ENCODE measurements at regions of chr4 and their contacts with region 1.

Region 1: DNA sequence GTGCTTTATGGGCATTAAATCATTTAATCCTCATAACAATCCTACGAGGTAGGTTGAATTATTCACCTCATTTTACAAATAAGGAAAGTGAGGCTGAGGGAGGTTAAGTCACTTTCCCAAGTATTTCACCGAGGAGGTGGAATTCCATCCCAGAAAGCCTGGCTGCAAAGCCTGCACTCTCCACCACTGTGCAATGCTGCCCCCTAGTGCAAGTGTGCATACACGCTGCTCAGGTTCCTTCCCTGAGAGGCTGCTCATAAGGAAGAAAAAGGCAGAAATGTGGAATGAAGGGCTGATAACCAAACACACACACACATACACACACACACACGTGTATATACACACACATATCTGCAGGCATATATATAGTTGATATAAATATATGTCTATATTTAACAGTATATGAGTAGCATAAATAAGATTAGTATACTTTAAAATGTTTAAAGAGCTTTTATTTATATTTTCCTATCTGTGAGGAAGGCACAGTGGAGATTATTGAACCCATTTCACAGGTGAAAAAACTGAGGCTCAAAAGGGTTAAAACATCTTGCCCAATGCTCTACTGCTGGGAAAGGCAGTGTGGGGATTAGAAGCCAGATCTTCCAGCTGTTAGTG is 714.5 kb upstream of the TENM3 start:
- DNase-seq: peak; percentile 22
- CTCF ChIP-seq: peak; percentile 88

Region 2: GRCh38 chr4:180828440-180829018 is 700.1 kb before region 1 on chr4:
- CTCF ChIA-PET with region 1: interaction called, 11 read pairs
- POLR2A ChIA-PET with region 1: no interaction called
- DNase-seq: no peak
- CTCF ChIP-seq: peak; percentile 55

Region 3: GRCh38 chr4:181143250-181143854 is 385.3 kb before region 1 on chr4:
- CTCF ChIA-PET with region 1: interaction called, 69 read pairs
- POLR2A ChIA-PET with region 1: no interaction called
- DNase-seq: peak; percentile 44
- CTCF ChIP-seq: peak; percentile 81

Region 4: DNA sequence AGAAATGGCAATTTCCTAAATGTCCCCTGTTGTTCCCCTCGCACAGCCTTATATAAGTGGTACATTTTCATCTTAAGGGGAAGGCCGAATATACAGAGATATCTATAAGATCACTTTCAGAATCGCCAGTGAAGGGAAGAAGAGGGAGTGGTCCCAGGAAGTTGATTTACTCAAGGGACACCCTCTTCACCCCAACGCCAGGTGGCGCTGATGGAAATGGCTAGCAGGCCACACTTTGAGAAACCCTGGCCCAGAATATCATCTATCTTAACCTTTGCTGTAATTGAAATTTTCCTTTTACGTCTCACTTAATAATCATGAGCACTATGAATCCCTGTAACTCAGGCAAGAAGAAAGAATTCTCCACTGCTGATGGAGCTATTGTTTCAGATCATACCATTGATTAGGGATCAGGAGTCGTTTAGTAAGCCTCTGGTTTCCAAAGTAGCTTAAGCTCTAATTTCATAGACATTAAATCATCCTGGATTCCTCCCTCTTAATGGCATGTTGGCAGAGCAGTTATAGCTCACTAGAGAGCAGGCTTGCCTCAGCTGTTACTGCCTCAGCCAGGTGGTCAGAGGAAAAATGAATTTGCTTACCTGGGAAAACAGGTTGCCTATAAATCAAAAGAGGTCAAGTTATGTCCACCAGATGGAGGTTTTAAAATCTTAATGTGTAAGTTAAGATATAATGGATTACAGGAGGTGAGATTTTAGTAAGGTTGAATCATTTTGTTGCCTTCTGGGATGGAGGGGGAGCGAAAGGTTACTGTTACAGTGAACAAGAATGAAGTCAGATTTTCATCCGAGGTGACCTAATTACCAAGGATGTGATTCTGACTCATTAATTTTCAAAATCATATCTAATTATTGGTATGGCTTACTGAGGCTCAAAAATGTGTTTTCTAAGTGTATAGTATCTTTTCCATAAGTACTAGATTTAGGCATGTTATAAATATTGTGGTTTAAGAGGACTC is 226.7 kb before region 1 on chr4:
- CTCF ChIA-PET with region 1: interaction called, 38 read pairs
- POLR2A ChIA-PET with region 1: no interaction called
- DNase-seq: no peak
- CTCF ChIP-seq: peak; percentile 52

Region 5: DNA sequence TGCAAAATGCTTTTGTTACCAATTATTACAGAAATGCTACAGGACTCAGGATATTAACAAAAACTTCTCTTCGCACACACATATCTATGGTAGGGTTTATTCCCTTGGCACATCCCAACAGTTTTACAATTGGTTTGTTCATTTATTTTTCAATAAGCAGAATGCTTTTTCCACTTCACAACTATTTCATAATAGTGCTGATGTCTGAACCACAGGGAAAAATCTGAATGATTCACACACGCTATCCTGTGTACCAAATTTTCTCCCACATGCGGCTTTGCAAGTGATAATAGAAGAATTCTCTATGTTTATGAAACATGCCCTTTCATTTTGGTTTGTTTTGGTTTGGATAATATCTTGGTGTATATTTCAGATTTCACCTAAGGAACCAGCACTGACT is 11.2 kb before region 1 on chr4:
- CTCF ChIA-PET with region 1: interaction called, 32 read pairs
- POLR2A ChIA-PET with region 1: no interaction called
- DNase-seq: no peak
- CTCF ChIP-seq: no peak